Activated T-helper 1 cell treated with anti-CD3 and anti-CD28 coated beads, Interleukin-12 subunit alpha, Interleukin-12 subunit beta, Interleukin-2, Interleukin-4 antibody, amounts not matched to agents 30 ng/mL and 10 ng/mL and 1 ng/mL, durations not matched to agents 14 hours and 24 hours and 36 hours (primary cell): ENCODE measurements at regions of chr12 and their contacts with region 1.

Region 1: DNA sequence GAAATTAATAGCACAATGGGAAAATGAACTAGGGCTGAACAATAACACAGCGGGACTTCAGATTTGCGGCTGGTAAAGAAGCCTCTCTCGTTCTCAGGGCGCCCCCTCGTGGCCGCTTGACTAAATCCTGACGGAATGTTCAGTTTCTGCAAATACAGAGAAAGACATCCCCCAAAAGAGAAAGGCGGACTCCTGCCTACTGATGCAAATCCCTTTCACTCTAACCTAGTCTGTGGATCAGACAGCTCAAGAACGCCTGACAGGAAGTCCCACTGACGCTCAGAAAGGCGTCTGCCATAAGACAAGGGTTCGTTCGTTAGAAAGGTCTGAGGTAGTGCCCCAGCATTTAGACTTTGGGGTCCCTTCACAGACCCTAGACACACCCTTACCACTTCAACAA is 2.5 kb downstream of the NUAK1 start:
- DNase-seq: peak; percentile 48
- H3K4me3 Mint-ChIP-seq: no peak overlapping the region
- H3K27ac Mint-ChIP-seq: no peak overlapping the region
- H3K4me1 Mint-ChIP-seq: no peaks in the 10 kb centered on the region
- H3K27me3 Mint-ChIP-seq: peaks cover 39% of the 10 kb centered on the region

Region 2: DNA sequence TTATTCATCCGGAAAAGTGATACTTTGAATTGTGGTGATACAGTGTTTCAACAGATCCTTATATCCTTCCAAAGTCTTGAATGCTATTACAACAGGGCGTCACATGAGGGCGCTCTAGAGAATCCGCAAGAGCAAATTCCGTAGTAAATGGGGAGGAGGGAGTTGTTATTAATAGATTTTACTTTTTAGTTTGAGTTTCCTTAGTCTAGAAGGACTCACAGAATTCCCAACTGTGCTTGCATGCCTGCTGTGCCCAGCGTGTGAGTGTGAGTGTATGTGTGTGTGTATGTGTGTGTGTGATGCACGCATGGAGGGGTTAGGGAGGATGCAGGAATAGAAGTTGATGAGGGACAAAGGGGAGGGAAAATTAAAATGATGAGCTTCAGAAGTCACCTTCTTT is 430.5 kb before region 1 on chr12:
- intact Hi-C with region 1: loop called (anchors 1 kb)
- DNase-seq: no peak
- H3K4me3 Mint-ChIP-seq: no peak overlapping the region
- H3K27ac Mint-ChIP-seq: no peak overlapping the region
- H3K4me1 Mint-ChIP-seq: no peaks in the 10 kb centered on the region
- H3K27me3 Mint-ChIP-seq: no peaks in the 10 kb centered on the region

Region 3: GRCh38 chr12:106774005-106774807 is 637.9 kb after region 1 on chr12 and contains the start of gene RIC8B:
- intact Hi-C with region 1: no loop called
- DNase-seq: peak; percentile 77
- H3K4me3 Mint-ChIP-seq: peak within 1 kb of the TSS; percentile 100
- H3K27ac Mint-ChIP-seq: peak within 1 kb of the TSS; percentile 98
- H3K4me1 Mint-ChIP-seq: peaks cover 37% of the 10 kb centered on the region
- H3K27me3 Mint-ChIP-seq: no peaks in the 10 kb centered on the region
- total RNA-seq, gene RIC8B: 11.4 and 12.3 TPM in 2 replicates